ENCODE measurements at regions of chr2 and their contacts with region 1.

Region 1: GRCh38 chr2:201642579-201643215 is 606 bp downstream of the TMEM237 start:
- DNase-seq: peak; percentile 87

Region 2: DNA sequence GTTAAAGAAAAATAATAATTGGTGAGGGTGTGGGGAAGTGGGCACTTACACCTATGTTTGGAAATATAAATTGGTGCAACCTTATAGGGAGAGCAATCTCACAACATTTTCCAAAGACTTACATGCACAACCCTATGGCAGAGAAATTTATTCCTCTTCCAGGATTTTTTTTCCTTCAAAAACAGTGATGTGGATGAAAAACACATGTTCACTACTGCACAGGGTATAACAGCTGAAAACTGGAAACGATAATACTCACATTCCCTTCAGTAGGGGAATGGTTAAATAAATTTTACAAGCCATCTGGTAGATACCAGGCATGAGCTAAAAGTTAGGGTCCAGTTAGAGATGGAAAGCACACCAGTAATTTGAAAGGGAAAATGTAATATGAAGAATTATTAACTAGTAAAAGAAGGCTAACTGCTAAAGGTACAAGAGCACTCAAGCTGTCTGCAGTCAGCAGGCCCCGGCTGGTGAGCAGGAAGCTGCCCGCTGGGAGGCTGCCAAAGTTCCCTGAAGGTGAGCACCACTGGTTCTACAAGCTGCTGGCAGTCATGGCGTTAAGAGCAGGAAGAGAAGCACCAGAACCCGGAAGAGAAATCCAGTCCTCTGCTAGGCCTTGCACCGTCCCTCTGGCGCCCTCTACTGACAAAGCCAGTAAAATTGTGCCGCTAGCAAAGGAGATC is 410.8 kb before region 1 on chr2:
- intact Hi-C with region 1: loop called (anchors 10 kb)
- DNase-seq: peak; percentile 93

Region 3: DNA sequence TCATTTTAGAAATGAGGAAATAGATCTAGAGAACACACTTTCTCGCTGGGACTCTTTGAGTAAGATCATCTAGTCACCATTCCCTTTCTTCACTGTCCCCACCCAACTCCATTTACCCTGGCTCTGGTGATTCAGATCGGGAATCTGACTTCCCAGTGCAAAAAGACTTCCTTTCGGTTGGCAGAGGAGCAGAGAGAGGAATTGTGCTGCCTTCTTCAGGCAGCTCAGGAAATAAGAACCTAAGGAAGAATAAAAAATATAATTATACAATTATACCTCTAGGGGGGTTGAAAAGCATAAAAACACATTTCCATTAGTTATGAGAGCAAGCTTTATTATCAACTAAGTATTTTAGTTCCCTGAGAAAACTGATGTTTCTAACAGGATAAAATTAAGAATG is 65.1 kb after region 1 on chr2:
- intact Hi-C with region 1: loop called (anchors 5 kb)
- DNase-seq: no peak

Region 4: DNA sequence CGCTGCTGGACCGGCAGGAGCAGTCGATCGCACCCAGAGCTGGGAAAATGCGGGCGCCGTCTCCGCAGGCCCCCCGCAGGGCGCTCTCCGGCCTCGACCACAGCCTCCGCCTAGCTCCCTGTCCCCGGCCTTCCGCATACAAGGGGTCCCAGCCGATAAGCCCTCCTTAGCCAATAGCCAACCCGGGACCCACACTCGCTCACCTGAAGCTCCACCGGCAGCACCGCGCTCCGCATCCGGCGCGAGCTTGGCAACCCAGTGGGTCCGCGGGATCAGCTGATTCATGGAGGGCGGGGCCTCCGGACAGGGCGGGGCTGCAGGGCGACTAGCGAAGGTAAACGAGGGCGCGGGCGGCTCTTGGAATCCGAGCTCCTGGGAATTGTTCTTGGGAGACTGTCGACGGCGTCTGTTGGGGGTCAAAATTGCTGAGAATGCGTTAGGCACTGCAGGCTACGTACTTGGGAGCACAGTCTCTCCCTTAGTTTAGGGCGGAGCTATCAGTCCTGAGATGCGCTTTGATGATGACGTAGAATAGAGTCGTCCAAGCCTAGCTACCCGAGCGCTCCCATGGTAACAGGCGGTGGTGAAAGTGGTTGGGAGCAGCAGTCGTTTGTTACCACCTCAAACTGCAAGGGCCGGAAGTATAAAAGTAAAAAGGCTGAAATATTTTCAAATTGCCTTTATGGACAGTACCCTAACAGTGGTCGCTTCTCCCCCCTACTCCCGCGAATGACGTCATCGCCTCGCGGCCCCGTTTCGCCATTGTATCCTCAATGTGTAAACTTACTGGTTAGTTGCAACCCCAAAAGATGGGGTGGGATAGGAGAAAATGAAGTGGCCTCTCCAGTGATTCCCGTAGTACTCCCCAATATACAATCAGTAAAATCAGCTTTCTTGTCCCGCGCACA is 138.2 kb after region 1 on chr2 and contains the start of gene ALS2:
- intact Hi-C with region 1: loop called (anchors 10 kb)
- DNase-seq: peak; percentile 98
- total RNA-seq, gene ALS2: 36.5 TPM

Measured in cardiac septum (tissue), 1 donor.